HEK293 (cell line): ENCODE measurements at regions of chr19 and their contacts with region 1.

Region 1: GRCh38 chr19:10332955-10333757 is at the start of gene RAVER1:
- H3K4me3 ChIP-seq: peak within 1 kb of the TSS; percentile 92
- H3K27ac ChIP-seq: peak within 1 kb of the TSS; percentile 78
- H3K4me1 ChIP-seq: no peaks in the 10 kb centered on the region
- CTCF ChIP-seq: peak; percentile 92

Region 2: GRCh38 chr19:10209315-10209714 is 123.8 kb before region 1 on chr19:
- CTCF ChIA-PET with region 1: no interaction called
- POLR2A ChIA-PET with region 1: no interaction called
- H3K4me3 ChIP-seq: no peak overlapping the region
- H3K27ac ChIP-seq: no peak overlapping the region
- H3K4me1 ChIP-seq: no peaks in the 10 kb centered on the region
- CTCF ChIP-seq: no peak

Region 3: DNA sequence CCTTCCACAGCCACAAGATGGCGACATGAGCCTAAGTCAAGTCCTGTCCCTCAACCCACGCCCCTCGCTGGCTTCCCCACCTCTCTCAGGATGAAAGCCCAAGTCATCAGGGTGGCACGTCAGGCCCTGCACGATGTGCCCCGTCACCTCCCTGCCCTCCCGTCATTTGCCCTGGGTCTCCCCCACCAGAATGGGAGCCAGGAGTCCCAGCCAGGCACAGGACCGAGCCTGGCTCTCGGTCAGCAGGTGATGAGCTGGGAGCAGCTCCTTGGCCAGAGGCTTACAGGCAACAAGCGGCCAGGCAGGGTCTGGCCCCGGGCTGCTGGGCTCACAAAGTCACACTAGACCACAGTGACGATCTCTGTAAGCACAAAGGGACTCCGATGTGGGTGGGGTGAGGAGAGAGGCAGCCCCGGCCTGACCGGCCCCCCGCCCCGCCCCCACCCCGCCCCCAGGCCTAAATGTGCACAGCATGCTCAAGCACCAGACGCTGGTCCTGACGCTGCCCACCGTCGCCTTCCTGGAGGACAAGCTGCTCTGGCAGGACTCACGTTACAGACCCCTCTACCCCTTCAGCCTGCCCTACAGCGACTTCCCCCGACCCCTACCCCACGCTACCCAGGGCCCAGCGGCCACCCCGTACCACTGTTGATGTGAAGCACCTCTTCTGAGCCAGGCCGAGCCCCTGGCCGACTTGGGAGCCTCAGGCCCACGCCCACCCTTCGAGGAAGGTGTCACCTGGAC is 73.8 kb before region 1 on chr19:
- CTCF ChIA-PET with region 1: interaction called, 19 read pairs
- POLR2A ChIA-PET with region 1: interaction called, 6 read pairs
- H3K4me3 ChIP-seq: no peak overlapping the region
- H3K27ac ChIP-seq: no peak overlapping the region
- H3K4me1 ChIP-seq: no peaks in the 10 kb centered on the region
- CTCF ChIP-seq: peak; percentile 85

Region 4: GRCh38 chr19:10292206-10292788 is 40.9 kb before region 1 on chr19:
- CTCF ChIA-PET with region 1: interaction called, 6 read pairs
- POLR2A ChIA-PET with region 1: interaction called, 16 read pairs
- H3K4me3 ChIP-seq: peak overlapping the region; percentile 43
- H3K27ac ChIP-seq: peak overlapping the region; percentile 6; the same call in 1 of the 2 replicates
- H3K4me1 ChIP-seq: peaks cover 4% of the 10 kb centered on the region; the same call in 1 of the 2 replicates
- CTCF ChIP-seq: no peak

Region 5: GRCh38 chr19:10321874-10322835 is 11.0 kb before region 1 on chr19:
- CTCF ChIA-PET with region 1: interaction called, 4 read pairs
- POLR2A ChIA-PET with region 1: interaction called, 17 read pairs
- H3K4me3 ChIP-seq: no peak overlapping the region
- H3K27ac ChIP-seq: no peak overlapping the region
- H3K4me1 ChIP-seq: no peaks in the 10 kb centered on the region
- CTCF ChIP-seq: no peak

Region 6: DNA sequence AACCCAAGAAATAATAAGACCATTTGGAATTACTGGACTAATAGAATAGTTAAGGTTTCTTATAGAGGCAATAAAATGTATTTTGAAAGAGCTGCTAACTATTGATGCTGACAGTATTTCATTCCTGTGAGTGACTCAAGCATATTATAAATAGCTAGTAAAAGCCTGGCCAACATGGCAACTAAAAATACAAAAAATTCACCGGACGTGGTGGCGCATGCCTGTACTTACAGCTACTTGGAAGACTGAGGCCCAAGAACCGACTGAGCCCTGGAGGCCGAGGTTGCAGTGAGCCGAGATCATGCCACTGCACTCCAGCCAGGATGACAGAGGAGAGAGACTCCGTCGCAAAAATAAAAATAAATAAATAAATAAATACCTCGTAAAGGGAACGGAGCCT is 11.6 kb after region 1 on chr19:
- CTCF ChIA-PET with region 1: interaction called, 4 read pairs
- POLR2A ChIA-PET with region 1: interaction called, 26 read pairs
- H3K4me3 ChIP-seq: no peak overlapping the region
- H3K27ac ChIP-seq: no peak overlapping the region
- H3K4me1 ChIP-seq: no peaks in the 10 kb centered on the region
- CTCF ChIP-seq: no peak